WTC11 (cell line): ENCODE measurements at regions of chr1 and their contacts with region 1.

Region 1: GRCh38 chr1:34162852-34163766 is 1.9 kb downstream of the CSMD2 start:
- DNase-seq: peak; percentile 84
- ATAC-seq: peak; percentile 56
- H3K4me3 Mint-ChIP-seq: peak overlapping the region; percentile 93
- H3K27ac Mint-ChIP-seq: peak overlapping the region; percentile 85
- H3K4me1 Mint-ChIP-seq: peaks cover 38% of the 10 kb centered on the region
- H3K27me3 Mint-ChIP-seq: no peaks in the 10 kb centered on the region; the same call in 1 of the 2 replicates
- CTCF ChIP-seq: peak; percentile 42

Region 2: DNA sequence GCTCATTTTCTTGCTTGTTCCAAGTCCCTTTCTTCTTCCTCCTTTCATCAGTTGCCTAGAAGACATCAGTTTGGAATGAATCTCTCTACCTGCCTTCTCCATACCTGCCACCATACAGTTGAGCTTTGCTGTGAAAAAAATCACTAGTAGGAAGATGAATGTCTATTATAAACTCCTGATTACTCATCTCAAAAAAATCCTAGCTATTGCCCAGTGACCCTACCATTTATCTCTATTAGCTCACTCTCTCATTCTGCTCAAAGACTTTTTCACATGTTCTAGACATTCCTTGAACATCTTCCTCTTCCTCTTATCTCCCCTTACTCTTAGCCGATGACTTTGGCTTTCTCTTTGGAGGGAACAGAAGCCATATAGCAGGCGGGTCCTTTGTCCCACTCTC is 348.9 kb before region 1 on chr1:
- CTCF ChIA-PET with region 1: no interaction called
- POLR2A ChIA-PET with region 1: no interaction called
- DNase-seq: no peak
- ATAC-seq: no peak
- H3K4me3 Mint-ChIP-seq: no peak overlapping the region
- H3K27ac Mint-ChIP-seq: no peak overlapping the region
- H3K4me1 Mint-ChIP-seq: no peaks in the 10 kb centered on the region
- H3K27me3 Mint-ChIP-seq: no peaks in the 10 kb centered on the region
- CTCF ChIP-seq: no peak

Region 3: DNA sequence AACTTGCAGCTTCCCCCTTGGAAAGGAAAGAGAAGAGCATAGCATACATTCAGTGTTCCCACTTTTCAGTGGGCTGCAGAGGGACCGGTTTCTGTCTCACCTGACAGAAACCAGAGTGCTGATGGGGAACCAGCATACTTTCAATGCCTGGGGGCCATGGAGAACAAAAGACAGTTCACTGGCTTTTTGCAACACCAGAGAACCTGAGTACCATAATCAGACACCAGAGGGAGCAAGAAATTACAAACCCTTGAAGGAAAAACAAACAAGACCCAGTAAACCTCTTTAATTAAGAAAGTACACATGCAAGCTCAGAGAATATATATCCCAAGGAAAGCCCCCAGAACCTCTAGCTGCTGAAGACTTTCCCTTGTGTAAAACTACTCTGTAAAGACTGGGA is 49.2 kb before region 1 on chr1:
- CTCF ChIA-PET with region 1: interaction called, 63 read pairs
- POLR2A ChIA-PET with region 1: interaction called, 3 read pairs
- DNase-seq: peak; percentile 35
- ATAC-seq: peak; percentile 86
- H3K4me3 Mint-ChIP-seq: no peak overlapping the region
- H3K27ac Mint-ChIP-seq: peak overlapping the region; percentile 89
- H3K4me1 Mint-ChIP-seq: peaks cover 23% of the 10 kb centered on the region
- H3K27me3 Mint-ChIP-seq: no peaks in the 10 kb centered on the region
- CTCF ChIP-seq: peak; percentile 52; the same call in 1 of the 2 replicates

Region 4: DNA sequence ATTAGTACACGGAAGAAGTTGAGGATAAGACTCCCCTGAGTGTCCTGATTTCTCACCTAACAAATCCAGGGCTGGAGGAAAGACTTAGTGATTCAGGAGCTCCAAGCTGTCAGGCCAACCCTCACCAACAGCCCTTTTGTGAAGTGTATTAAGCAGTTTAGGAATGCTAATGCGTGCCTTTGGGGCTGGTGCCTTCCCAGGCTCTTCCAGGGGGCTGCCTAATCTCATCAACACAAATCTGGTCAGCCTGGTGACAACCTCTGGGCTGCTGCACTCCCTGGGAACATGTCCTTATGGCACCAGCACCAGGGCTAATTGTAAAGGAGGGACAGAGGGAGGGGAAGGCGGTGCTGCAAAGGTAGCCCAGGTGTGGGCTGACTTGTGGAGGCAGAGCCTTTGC is 13.6 kb before region 1 on chr1:
- CTCF ChIA-PET with region 1: interaction called, 11 read pairs
- POLR2A ChIA-PET with region 1: interaction called, 5 read pairs
- DNase-seq: peak; percentile 37
- ATAC-seq: peak; percentile 89
- H3K4me3 Mint-ChIP-seq: peak overlapping the region; percentile 12; the same call in 1 of the 2 replicates
- H3K27ac Mint-ChIP-seq: peak overlapping the region; percentile 92
- H3K4me1 Mint-ChIP-seq: peaks cover 59% of the 10 kb centered on the region
- H3K27me3 Mint-ChIP-seq: no peaks in the 10 kb centered on the region
- CTCF ChIP-seq: no peak

Region 5: DNA sequence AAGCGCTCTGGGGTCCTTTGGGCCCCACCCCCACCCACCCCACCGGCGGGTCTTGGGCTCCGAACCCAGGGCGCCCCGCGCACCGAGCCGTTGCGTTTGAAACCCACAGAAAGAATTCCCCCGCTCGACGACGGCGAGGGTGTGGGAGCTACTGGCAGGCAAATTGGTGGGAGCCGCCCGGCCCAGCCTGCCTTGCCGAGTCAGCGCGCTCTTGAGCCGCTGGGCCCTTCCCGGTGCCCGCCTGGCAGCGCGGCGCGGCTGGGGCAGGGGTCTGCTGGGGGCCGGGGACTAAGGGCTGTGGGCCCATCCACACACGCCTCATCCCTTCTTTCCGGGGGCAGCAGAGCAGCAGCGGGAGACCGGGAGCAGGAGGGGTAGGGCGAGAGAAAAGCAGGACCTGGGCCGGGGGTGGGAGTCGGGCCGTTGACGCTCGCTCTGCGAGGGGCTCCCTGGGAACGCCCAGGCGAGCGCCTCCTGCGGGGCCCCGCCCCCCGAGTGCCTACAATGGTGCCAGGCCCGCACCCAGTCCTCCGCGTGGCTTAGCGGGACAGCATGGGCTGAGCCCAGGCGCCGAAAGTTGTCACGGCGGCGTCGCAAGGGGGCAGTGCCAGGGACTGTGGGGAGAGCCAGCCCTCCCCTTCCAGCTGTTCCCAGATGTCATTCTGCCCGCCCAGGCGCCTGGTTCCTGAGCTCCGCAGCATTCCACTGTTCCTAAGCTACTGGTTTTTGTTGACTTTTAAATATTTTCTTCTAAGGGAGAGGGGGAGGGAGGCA is 13.9 kb after region 1 on chr1 and contains the start of gene C1orf94:
- CTCF ChIA-PET with region 1: interaction called, 28 read pairs
- POLR2A ChIA-PET with region 1: interaction called, 29 read pairs
- DNase-seq: peak; percentile 56
- ATAC-seq: peak; percentile 71
- H3K4me3 Mint-ChIP-seq: peak within 1 kb of the TSS; percentile 56
- H3K27ac Mint-ChIP-seq: no peak within 1 kb of the TSS
- H3K4me1 Mint-ChIP-seq: peaks cover 58% of the 10 kb centered on the region
- H3K27me3 Mint-ChIP-seq: peaks cover 15% of the 10 kb centered on the region
- CTCF ChIP-seq: no peak
- total RNA-seq, gene C1orf94: 5.5 to 6.0 TPM (median 5.5 TPM) in 3 replicates

Region 6: DNA sequence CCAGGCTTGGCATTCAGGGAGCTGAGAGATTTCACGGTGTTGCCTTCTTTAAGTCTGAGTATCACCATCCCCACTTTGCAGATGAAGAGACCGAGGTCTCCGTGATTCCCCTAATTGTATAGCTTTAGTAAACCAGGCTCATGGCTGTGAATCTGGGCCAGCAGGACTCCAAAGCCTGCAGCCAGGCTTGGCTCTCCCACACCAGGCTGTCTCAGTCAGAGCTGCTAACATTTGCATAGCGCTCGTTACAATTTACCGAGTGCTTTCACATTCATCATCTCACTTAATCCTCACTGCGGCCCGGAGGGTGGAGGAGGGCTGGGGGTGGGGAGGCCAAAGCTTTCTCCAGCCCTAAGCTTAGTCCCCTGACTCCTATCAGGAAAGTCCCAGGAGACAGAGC is 25.3 kb after region 1 on chr1:
- CTCF ChIA-PET with region 1: interaction called, 29 read pairs
- POLR2A ChIA-PET with region 1: interaction called, 3 read pairs
- DNase-seq: peak; percentile 64
- ATAC-seq: peak; percentile 95
- H3K4me3 Mint-ChIP-seq: peak overlapping the region; percentile 6
- H3K27ac Mint-ChIP-seq: peak overlapping the region; percentile 60
- H3K4me1 Mint-ChIP-seq: peaks cover 67% of the 10 kb centered on the region
- H3K27me3 Mint-ChIP-seq: peaks cover 34% of the 10 kb centered on the region
- CTCF ChIP-seq: no peak

Region 7: GRCh38 chr1:34292472-34292871 is 129.4 kb after region 1 on chr1:
- CTCF ChIA-PET with region 1: no interaction called
- POLR2A ChIA-PET with region 1: no interaction called
- DNase-seq: no peak
- ATAC-seq: peak; percentile 91
- H3K4me3 Mint-ChIP-seq: no peak overlapping the region
- H3K27ac Mint-ChIP-seq: no peak overlapping the region
- H3K4me1 Mint-ChIP-seq: no peaks in the 10 kb centered on the region
- H3K27me3 Mint-ChIP-seq: peaks cover 6% of the 10 kb centered on the region
- CTCF ChIP-seq: no peak

Region 8: GRCh38 chr1:34419663-34420136 is 256.6 kb after region 1 on chr1:
- CTCF ChIA-PET with region 1: interaction called, 11 read pairs
- POLR2A ChIA-PET with region 1: no interaction called
- DNase-seq: peak; percentile 57
- ATAC-seq: peak; percentile 98
- H3K4me3 Mint-ChIP-seq: no peak overlapping the region
- H3K27ac Mint-ChIP-seq: no peak overlapping the region
- H3K4me1 Mint-ChIP-seq: peaks cover 8% of the 10 kb centered on the region
- H3K27me3 Mint-ChIP-seq: peaks cover 5% of the 10 kb centered on the region; the same call in 1 of the 2 replicates
- CTCF ChIP-seq: no peak